ENCODE measurements at regions of chr19 and their contacts with region 1.

Region 1: DNA sequence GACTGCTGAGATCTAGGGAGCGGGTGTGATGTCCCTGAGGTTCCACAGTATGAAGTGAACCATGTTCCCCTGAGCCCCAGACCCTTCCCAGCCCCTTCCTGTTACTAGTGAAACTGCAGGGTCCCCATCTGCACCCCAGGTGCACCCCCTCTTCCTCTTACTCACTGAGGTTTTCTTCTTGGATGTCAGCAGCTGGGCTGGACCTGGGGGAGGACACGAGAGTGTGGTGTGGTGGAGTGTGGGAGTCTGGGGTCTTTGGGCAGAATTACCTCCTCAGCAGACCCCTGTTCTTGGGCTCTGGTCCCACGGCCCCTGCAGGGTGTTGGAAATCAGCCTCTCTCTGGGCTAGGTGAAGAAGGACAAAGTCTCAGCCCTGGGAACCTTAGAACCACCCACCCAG is 3.3 kb upstream of the LILRA6 start:
- DNase-seq: no peak
- ATAC-seq: no peak

Region 2: DNA sequence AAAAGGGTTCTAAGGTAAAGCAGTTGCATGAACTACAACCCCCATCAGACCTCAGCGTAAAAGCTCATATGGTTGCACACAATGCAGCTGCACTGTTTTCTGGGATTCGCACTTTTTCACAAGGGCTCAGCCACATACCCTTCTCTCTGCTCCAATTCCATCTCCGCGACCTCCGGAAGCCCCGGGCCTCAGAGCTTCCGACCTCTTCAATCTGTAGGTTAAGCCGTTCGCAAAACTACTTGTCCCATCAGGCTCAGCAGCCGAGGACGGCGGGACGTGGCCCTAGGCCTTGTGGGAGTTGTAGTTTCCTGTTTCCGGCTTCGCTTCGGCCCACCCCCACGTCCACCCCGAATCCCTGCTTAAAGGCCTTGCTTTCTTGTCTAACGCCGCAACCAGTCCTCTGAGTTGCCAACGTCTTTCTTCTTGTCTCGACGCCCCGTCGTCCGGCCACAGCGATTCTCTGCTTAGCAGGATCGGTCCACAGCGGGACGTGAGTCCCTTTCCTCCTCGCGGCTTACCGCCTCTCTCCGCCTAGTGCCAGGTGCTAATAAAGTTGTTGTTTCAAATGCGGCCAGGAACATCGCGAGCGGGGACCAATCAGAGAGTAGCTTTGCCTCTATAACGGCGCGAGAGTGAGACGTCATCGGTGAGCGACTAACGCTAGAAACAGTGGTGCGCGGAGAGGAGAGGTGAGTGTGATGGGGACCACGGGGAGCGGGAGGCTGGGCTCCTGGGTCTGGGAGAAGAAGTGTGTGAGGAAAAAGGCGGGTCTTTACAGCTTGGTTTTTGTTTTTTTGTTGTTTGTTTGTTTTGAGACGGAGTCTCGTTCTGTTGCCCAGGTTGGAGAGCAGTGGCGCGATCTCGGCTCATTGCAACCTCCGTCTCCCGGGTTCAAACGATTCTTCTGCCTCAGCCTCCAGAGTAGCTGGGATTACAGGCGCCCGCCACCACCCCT is 130.6 kb before region 1 on chr19 and contains the starts of genes PRPF31 and TFPT:
- intact Hi-C with region 1: no loop called
- DNase-seq: peak; percentile 95 to 99
- ATAC-seq: peak; percentile 91
- total RNA-seq, gene PRPF31: 37.4 to 38.6 TPM
- total RNA-seq, gene TFPT: 12.4 to 12.7 TPM

Region 3: GRCh38 chr19:54218960-54219661 is 26.8 kb before region 1 on chr19:
- intact Hi-C with region 1: loop called in 1 of 2 experiments (anchors 2 kb)
- DNase-seq: peak in 1 of 2 donors; percentile 21
- ATAC-seq: no peak

Region 4: GRCh38 chr19:54302257-54302656 is 56.3 kb after region 1 on chr19:
- intact Hi-C with region 1: no loop called
- DNase-seq: no peak
- ATAC-seq: no peak